ENCODE measurements at regions of chr1 and their contacts with region 1.

Region 1: DNA sequence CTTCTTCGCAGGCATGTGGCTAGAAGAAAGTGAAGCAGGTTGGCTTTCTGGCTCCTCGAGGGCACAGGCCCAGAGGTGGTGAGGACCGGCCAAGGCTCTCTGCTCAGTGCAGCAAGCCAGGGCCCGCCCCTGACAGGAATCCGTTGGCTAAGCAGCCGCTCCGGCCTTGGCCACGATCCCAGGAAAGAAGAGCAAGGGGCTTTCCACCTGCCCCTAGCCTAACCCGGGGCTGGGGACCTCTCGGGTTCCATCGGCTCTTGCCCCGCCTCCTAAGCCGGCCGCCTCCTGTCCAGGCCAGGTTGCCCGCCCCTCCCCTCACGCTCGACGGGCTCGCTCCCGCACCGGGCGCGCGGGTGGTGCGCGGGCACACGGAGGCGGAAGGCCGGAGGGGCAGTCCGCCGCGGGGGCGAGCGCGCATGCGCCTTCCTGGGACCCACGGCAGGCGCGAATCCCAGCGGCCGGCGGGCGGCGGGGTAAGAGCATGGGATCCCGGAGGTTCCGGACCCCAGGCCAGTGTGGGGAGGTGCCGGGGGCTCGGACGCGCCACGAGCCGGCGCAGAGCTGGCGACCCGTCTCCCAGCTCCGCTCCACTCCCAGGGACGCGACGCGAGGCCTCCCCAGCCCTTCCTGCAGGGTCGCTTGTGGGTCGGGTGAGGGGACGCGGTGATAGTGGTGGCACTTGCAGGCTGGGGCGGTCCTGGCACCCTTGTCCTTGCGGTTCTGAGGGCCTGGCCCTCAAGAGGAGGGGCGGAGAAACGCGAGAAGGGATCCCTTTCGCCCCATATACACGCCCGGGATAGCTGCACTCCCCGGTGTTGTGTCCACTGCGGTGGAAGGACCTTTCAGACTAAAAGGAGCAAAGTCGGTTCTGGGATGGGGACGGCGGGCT is at the start of gene ALG6:
- DNase-seq: peak; percentile 94
- ATAC-seq: peak; percentile 95
- H3K4me3 ChIP-seq: peak within 1 kb of the TSS; percentile 66 to 97 (median 83)
- H3K4me3 Mint-ChIP-seq: peak within 1 kb of the TSS; percentile 99
- H3K27ac ChIP-seq: peak within 1 kb of the TSS; percentile 70 to 82
- H3K27ac Mint-ChIP-seq: peak within 1 kb of the TSS; percentile 92
- H3K4me1 ChIP-seq: peaks cover 9 to 15% of the 10 kb centered on the region in 2 donors
- H3K4me1 Mint-ChIP-seq: peaks cover 19% of the 10 kb centered on the region
- H3K27me3 ChIP-seq: no peaks in the 10 kb centered on the region
- H3K27me3 Mint-ChIP-seq: peaks cover 6% of the 10 kb centered on the region
- CTCF ChIP-seq: no peak
- total RNA-seq, gene ALG6: 31.4 and 35.0 TPM in 2 replicates

Region 2: DNA sequence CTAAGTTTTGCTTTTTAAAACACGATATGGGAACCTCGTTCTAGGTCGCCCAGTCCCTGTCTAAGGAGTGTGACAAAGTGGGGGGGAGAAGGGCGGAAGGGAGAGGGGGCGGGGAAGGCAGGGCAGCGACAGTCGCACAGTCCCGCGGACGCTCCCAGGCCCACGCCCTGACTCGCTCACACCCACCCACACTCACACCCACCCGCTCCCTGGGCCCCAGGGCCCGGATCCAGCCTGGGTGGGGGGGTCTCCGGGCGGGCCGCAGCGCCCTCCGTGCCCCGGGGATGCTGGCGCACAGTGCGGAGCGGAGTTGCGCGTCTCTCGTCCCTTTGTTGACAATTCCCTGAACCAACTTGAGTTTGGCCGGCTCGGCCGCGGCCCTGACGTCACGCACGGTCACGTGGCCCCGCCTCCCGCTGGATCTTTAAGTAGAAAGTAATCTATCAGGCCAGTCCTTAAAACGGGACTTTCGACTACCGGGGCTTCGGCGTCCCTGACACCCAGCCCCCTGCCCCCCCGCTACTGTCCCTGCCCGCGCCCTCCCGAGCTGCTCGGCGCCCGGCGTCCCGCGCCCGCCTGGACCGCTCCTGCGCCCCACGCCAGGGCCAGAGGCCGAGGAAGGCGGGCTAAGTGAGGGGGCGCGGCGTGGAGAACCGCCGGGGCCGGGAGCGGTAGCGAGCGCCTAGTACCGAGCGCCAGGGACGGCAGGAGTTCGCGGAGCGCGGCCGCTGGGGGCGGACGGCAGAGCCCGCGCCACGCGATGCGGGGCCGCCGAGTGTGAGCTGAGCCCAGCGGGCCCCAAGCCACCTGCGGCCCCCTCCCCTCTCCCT is 45.1 kb before region 1 on chr1 and contains the start of gene FOXD3:
- CTCF ChIA-PET with region 1: no interaction called
- POLR2A ChIA-PET with region 1: no interaction called
- intact Hi-C with region 1: loop called (anchors 2 kb)
- DNase-seq: peak; percentile 61
- ATAC-seq: peak; percentile 25
- H3K4me3 ChIP-seq: peak within 1 kb of the TSS; percentile 38 to 57 (median 53)
- H3K4me3 Mint-ChIP-seq: peak within 1 kb of the TSS; percentile 88
- H3K27ac ChIP-seq: no peak within 1 kb of the TSS
- H3K27ac Mint-ChIP-seq: peak within 1 kb of the TSS; percentile 87
- H3K4me1 ChIP-seq: peaks cover 55 to 73% of the 10 kb centered on the region in 2 donors
- H3K4me1 Mint-ChIP-seq: peaks cover 33% of the 10 kb centered on the region
- H3K27me3 ChIP-seq: peaks cover 2 to 83% (median 71%) of the 10 kb centered on the region in 4 experiments
- H3K27me3 Mint-ChIP-seq: peaks cover 66% of the 10 kb centered on the region
- CTCF ChIP-seq: no peak
- total RNA-seq, gene FOXD3: not detected in 2 replicates

Region 3: DNA sequence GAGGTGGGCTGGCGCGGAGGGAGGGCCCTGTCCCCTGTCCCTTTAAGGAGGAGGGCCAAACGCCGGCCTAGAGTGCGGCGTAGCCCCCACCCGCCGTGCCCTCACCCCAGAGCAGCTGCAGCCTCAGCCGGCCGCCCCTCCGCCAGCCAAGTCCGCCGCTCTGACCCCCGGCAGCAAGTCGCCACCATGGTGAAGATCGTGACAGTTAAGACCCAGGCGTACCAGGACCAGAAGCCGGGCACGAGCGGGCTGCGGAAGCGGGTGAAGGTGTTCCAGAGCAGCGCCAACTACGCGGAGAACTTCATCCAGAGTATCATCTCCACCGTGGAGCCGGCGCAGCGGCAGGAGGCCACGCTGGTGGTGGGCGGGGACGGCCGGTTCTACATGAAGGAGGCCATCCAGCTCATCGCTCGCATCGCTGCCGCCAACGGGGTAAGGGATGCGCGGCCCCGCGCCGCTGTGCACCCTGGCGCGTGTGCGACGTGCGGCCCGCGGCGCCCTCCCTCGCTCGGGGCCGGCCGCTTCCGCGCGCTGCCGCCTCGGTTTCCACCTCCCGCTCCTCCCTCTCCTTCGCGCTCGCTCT is 225.9 kb after region 1 on chr1 and contains the start of gene PGM1:
- CTCF ChIA-PET with region 1: no interaction called
- POLR2A ChIA-PET with region 1: no interaction called
- intact Hi-C with region 1: loop called (anchors 1 kb)
- DNase-seq: peak; percentile 81
- ATAC-seq: peak; percentile 81
- H3K4me3 ChIP-seq: peak within 1 kb of the TSS; percentile 32 to 92 (median 80)
- H3K4me3 Mint-ChIP-seq: peak within 1 kb of the TSS; percentile 98
- H3K27ac ChIP-seq: peak within 1 kb of the TSS; percentile 78 to 88
- H3K27ac Mint-ChIP-seq: peak within 1 kb of the TSS; percentile 98
- H3K4me1 ChIP-seq: peaks cover 6 to 9% of the 10 kb centered on the region in 2 donors
- H3K4me1 Mint-ChIP-seq: peaks cover 13% of the 10 kb centered on the region
- H3K27me3 ChIP-seq: no peaks in the 10 kb centered on the region
- H3K27me3 Mint-ChIP-seq: no peaks in the 10 kb centered on the region
- CTCF ChIP-seq: no peak
- total RNA-seq, gene PGM1: 13.2 and 17.3 TPM in 2 replicates

Measured in B cell (primary cell).